ENCODE measurements at regions of chr2 and their contacts with region 1.

Region 1: GRCh38 chr2:43387092-43388062 is 161.0 kb upstream of the ZFP36L2 start:
- DNase-seq: no peak
- H3K4me3 Mint-ChIP-seq: no peak overlapping the region
- H3K27ac Mint-ChIP-seq: peak overlapping the region; percentile 50
- H3K4me1 Mint-ChIP-seq: peaks cover 27% of the 10 kb centered on the region
- H3K27me3 Mint-ChIP-seq: no peaks in the 10 kb centered on the region

Region 2: DNA sequence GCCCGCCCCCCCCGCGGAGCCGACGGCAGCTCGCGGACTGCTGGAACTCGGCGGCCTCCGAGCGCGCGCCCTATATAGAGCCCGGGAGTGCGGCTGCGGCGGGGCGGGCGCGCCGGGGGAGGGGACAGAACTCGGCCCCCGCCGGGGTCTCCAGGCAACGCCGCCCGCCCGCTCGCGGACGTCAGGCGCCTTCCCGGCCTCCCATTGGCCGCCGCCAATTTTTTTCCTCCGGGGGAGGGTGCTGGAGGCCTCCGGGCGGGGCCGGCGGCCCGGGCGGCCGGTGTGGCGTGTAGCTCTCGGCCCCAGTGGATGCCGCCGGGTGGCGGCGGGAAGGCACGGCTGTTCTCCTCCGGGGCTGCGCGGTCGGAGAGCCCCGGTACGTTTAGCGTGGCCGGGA is 160.8 kb before region 1 on chr2 and contains the start of gene ZFP36L2:
- intact Hi-C with region 1: no loop called
- DNase-seq: peak; percentile 95
- H3K4me3 Mint-ChIP-seq: peak within 1 kb of the TSS; percentile 92
- H3K27ac Mint-ChIP-seq: peak within 1 kb of the TSS; percentile 97
- H3K4me1 Mint-ChIP-seq: peaks cover 38% of the 10 kb centered on the region
- H3K27me3 Mint-ChIP-seq: no peaks in the 10 kb centered on the region
- total RNA-seq, gene ZFP36L2: 92.3 TPM in 2 replicates

Region 3: GRCh38 chr2:43402452-43402944 is 15.1 kb after region 1 on chr2:
- intact Hi-C with region 1: loop called (anchors 1 kb)
- DNase-seq: no peak
- H3K4me3 Mint-ChIP-seq: no peak overlapping the region
- H3K27ac Mint-ChIP-seq: no peak overlapping the region
- H3K4me1 Mint-ChIP-seq: peaks cover 21% of the 10 kb centered on the region
- H3K27me3 Mint-ChIP-seq: no peaks in the 10 kb centered on the region

Region 4: DNA sequence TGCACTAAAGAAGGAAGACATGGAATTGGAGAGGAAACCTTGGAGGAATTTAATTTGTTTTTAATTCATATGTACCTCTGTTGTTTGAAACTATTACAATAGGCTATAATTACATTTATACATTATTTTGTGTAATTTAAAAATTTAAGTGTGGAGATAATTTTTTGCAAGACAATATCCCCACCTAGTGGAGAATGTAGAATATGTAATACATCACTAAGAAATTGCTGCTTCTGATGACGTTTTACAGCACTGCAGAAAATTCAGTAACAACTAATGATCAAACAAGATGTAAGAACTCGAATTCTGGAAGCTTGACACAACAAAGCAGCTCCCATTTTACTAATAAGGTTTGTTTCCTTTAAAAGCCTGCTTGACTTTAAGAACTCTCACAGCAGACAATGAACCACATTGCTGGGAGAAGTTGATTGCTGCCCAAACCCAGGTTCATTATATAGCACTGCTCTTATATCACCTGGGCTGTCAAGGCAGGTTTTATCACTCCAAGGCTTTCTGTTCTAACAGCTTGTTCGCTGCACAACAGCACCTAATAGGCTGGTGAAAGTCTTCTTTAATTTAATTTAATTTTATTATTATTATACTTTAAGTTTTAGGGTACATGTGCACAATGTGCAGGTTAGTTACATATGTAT is 155.0 kb after region 1 on chr2:
- intact Hi-C with region 1: loop called (anchors 1 kb)
- DNase-seq: no peak
- H3K4me3 Mint-ChIP-seq: no peak overlapping the region
- H3K27ac Mint-ChIP-seq: no peak overlapping the region
- H3K4me1 Mint-ChIP-seq: peaks cover 18% of the 10 kb centered on the region
- H3K27me3 Mint-ChIP-seq: no peaks in the 10 kb centered on the region

Measured in activated T-helper 1 cell treated with anti-CD3 and anti-CD28 coated beads, Interleukin-12 subunit alpha, Interleukin-12 subunit beta, Interleukin-2, Interleukin-4 antibody, amounts not matched to agents 30 ng/mL and 10 ng/mL and 1 ng/mL, durations not matched to agents 14 hours and 24 hours and 36 hours (primary cell).